Caco-2 (cell line): ENCODE measurements at regions of chr13 and their contacts with region 1.

Region 1: DNA sequence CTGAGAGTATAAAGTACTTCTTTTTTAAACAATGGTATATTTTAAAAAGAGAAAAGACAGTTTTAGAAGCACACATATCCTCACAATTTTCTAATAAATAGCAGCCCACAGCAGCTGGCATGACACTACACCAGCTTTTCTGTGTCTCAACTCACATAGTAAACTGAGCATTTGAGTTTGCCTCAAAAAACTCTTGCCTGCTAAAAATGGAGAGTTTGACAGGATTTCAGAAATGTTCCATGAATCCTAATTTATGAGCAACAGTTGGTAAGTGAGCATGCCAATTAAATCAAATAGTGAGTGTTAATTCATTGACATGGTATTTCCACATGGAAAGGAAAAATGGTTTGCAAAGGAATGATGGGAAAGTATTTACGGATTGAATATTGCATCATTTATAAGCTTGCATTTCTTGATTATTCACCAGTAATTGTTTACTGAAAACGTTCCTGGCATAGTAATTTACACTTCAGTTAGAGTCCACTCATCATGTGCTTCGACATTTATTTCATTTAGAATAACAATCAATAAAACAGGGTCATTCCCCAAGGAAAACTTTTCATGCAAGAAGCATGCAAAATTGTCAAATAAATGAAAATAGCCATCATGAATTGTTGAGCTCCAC is 323.0 kb downstream of the EFNB2 start:
- DNase-seq: no peak
- H3K4me3 ChIP-seq: peak overlapping the region; percentile 58
- H3K4me3 Mint-ChIP-seq: peak overlapping the region; percentile 78
- H3K27ac Mint-ChIP-seq: peak overlapping the region; percentile 90
- H3K4me1 ChIP-seq: peaks cover 13% of the 10 kb centered on the region; the same call in 1 of the 2 replicates
- H3K4me1 Mint-ChIP-seq: peaks cover 6% of the 10 kb centered on the region
- H3K27me3 ChIP-seq: no peaks in the 10 kb centered on the region
- H3K27me3 Mint-ChIP-seq: no peaks in the 10 kb centered on the region
- CTCF ChIP-seq: no peak

Region 2: GRCh38 chr13:106182404-106182803 is 30.1 kb before region 1 on chr13:
- CTCF ChIA-PET with region 1: no interaction called
- POLR2A ChIA-PET with region 1: no interaction called
- intact Hi-C with region 1: loop called (anchors 2 kb)
- DNase-seq: no peak
- H3K4me3 ChIP-seq: no peak overlapping the region
- H3K4me3 Mint-ChIP-seq: no peak overlapping the region
- H3K27ac Mint-ChIP-seq: peak overlapping the region; percentile 30
- H3K4me1 ChIP-seq: peaks cover 35% of the 10 kb centered on the region
- H3K4me1 Mint-ChIP-seq: peaks cover 42% of the 10 kb centered on the region
- H3K27me3 ChIP-seq: no peaks in the 10 kb centered on the region
- H3K27me3 Mint-ChIP-seq: no peaks in the 10 kb centered on the region
- CTCF ChIP-seq: no peak

Region 3: DNA sequence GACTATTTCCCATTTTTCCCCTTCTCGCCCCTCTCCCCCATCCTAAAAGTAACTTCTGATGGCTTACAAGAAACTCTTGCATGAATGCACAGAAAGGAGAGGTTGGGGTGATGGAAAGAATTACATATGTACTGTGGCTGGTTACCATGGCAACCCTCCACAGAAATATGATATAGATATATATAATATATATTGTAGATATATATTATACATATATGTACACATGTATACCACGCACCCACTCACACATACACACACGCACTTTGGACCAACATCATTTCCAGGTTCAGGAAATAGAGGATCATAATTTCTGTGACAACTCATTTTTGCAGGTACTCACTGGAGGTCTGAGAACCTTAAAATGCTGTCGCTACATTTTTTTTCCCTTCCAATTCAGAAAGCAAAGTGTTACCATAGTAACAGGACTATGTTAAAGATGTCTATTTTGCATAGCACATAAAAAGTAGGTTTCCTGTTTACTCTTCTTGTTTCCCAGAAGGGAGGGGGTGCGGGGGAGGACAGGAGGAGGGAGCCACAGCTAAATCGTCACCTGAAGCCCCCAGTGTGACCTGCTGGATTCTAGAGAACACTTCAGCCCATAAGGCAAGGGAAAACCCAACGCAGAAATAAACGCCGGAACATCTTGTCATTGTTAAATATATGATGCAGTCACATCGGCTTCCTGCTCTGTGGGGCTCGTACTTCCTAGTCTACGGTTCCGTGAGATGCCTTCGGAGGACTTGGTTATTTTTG is 278.2 kb after region 1 on chr13:
- CTCF ChIA-PET with region 1: no interaction called
- POLR2A ChIA-PET with region 1: no interaction called
- intact Hi-C with region 1: no loop called
- DNase-seq: no peak
- H3K4me3 ChIP-seq: no peak overlapping the region
- H3K4me3 Mint-ChIP-seq: no peak overlapping the region
- H3K27ac Mint-ChIP-seq: peak overlapping the region; percentile 7
- H3K4me1 ChIP-seq: peaks cover 17% of the 10 kb centered on the region
- H3K4me1 Mint-ChIP-seq: peaks cover 19% of the 10 kb centered on the region
- H3K27me3 ChIP-seq: no peaks in the 10 kb centered on the region
- H3K27me3 Mint-ChIP-seq: no peaks in the 10 kb centered on the region
- CTCF ChIP-seq: no peak